Prostate gland (tissue), 2 donors: ENCODE measurements at regions of chrX and their contacts with region 1.

Region 1: DNA sequence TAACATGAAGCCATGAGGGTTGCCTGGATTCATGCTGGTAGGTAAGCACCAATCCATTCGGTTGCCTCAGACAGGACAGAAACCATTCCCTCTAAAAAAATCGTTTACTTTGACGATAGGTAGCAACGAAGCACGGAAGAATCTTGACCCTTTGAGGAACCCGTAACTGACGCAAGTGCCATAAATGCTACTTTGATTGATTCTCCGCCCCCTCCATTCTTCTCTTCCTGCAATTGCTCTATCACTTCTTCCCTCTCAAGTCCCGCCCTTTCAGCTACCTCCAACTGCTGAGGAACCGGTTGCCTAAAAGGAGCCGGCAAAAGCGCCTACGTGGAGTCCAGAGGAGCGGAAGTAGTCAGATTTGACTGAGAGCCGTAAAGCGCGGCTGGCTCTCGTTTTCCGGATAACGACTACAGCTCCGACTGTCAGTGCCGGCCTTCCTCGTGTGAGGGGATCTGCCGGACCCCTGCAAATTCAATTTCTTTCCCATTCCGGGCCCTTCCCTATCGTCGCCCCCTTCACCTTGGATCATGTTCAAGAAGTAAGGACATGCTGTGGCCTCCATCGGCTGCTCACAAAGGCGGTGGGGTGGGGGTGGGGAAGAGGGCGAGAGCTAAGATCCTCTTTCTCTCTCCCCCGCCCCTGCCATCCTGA is at the start of gene MCTS1:
- DNase-seq: peak; percentile 83
- H3K4me3 ChIP-seq: peak within 1 kb of the TSS; percentile 42 to 45
- H3K27ac ChIP-seq: peak within 1 kb of the TSS; percentile 81
- H3K4me1 ChIP-seq: no peaks in the 10 kb centered on the region
- H3K27me3 ChIP-seq: no peaks in the 10 kb centered on the region
- CTCF ChIP-seq: no peak
- POLR2A ChIP-seq: peak; percentile 35
- total RNA-seq, gene MCTS1: 17.5 to 23.6 TPM

Region 2: DNA sequence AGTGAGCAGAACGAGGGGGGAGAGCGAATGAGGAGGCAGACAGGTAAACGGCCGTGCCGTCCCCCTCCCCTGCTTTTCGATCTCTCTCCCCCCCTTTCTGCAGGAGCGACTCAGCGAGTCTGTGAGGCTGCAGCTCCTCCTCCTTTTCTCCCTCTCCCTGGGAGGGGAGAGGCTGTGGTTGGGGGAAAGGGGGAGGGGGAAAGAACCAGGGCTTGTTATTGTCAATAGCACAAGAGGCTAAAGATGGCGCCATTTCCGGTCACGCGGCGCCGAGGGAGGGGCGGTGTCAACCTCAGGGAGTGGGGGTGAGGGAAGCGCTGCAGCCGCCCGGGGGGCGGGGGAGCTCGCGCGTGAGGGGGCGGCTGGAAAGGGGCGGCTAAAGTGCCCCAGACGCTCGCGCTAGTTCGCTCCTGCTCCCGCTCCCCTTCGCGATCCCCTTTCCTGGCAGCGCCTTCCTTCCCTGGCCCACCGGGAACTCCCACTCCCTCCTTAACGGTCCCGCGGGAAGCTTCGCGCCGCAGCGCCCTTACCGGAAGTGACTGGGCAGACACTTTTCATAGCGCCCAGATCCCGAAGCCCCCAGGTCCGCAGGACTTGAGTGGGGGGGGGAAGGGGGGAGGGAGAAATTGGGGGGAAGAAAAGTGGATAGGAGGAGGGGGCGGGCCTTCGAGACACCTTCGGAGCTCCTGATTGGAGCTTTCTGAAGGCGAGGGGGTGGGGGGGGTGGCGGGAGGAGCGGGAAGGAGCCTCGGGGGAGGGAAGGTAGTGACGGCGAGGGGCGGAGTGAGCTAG is 42.8 kb before region 1 on chrX and contains the start of gene CUL4B:
- intact Hi-C with region 1: loop called (anchors 1 kb)
- DNase-seq: peak; percentile 89
- H3K4me3 ChIP-seq: peak within 1 kb of the TSS; percentile 56 to 59
- H3K27ac ChIP-seq: peak within 1 kb of the TSS; percentile 97 to 98
- H3K4me1 ChIP-seq: no peaks in the 10 kb centered on the region
- H3K27me3 ChIP-seq: no peaks in the 10 kb centered on the region
- CTCF ChIP-seq: no peak
- POLR2A ChIP-seq: peak; percentile 49
- total RNA-seq, gene CUL4B: 30.5 to 92.3 TPM

Region 3: DNA sequence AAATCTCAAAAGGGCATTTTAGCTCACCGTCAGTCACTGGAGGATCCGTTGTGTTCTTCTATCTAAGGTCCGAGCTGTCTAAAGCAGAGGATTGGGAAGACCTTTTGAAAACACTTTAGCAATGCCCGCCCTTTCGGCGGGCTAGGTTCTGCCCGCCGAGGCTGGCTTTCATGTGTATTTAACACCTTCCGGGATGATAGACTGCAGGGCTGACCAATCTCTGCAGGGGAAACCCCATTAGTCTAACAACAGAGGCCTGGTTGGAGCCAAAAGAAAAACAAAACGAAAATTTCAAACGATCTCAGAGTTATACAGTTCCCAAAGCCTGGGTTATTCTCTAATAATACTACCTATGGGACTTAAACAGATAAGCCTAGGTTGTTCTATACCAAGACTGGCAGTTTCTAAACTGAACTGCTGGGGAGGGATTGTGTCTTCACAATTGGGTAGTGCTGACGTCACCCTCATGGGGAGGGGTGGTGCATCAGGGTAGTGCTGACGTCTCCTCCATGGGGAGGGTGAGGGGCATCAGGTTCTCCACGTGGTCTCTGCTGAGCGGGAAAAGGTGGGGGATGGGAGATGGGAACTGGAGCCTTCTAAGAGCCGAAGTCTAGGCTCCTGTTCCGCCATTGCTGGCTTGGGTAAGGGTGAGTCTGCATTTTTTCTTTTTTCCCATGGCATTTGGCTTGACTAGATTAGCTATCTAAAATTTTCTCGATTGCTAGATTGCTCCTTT is 28.3 kb before region 1 on chrX:
- intact Hi-C with region 1: no loop called
- DNase-seq: no peak
- H3K4me3 ChIP-seq: no peak overlapping the region
- H3K27ac ChIP-seq: no peak overlapping the region
- H3K4me1 ChIP-seq: no peaks in the 10 kb centered on the region
- H3K27me3 ChIP-seq: no peaks in the 10 kb centered on the region
- CTCF ChIP-seq: no peak
- POLR2A ChIP-seq: no peak

Region 4: GRCh38 chrX:120629667-120630537 is 26.1 kb after region 1 on chrX and contains the start of gene C1GALT1C1:
- intact Hi-C with region 1: loop called (anchors 2 kb)
- DNase-seq: peak; percentile 82
- H3K4me3 ChIP-seq: peak within 1 kb of the TSS; percentile 42 to 48
- H3K27ac ChIP-seq: peak within 1 kb of the TSS; percentile 81 to 82
- H3K4me1 ChIP-seq: no peaks in the 10 kb centered on the region
- H3K27me3 ChIP-seq: no peaks in the 10 kb centered on the region
- CTCF ChIP-seq: no peak
- POLR2A ChIP-seq: peak; percentile 17
- total RNA-seq, gene C1GALT1C1: 24.4 to 33.7 TPM